A673 (cell line): ENCODE measurements at regions of chrX and their contacts with region 1.

Region 1: DNA sequence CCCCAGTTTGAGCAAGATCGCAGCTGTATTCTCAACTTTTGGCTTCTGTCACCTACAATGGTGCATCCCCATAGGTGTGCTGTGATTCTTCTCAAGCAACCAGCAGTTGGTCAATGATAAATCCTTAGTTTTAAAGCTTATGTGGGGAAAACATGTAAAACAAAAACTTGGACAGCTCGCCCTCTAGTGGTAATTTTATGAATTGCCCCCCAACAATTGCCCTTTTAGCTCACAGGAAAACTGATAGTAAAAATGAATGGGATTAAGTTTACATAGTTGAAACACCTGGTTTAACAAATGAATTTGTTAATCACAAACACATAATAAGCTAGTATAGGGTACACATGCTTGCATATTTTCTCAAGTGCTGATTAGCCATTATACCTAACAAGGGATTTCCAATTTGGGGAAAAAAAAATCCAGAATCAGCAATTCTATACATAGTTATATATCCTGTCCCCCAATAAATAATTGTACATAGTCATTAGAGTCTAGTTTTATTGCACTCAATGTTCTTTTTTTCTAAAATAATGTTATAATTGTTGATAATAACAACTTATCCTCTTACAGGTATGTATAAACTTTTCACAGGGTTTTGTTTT is 30.1 kb downstream of the TEX13A start:
- DNase-seq: peak; percentile 35
- H3K4me3 ChIP-seq: no peak overlapping the region
- H3K27ac ChIP-seq: no peak overlapping the region
- H3K4me1 ChIP-seq: no peaks in the 10 kb centered on the region
- H3K27me3 ChIP-seq: no peaks in the 10 kb centered on the region
- CTCF ChIP-seq: peak; percentile 77

Region 2: DNA sequence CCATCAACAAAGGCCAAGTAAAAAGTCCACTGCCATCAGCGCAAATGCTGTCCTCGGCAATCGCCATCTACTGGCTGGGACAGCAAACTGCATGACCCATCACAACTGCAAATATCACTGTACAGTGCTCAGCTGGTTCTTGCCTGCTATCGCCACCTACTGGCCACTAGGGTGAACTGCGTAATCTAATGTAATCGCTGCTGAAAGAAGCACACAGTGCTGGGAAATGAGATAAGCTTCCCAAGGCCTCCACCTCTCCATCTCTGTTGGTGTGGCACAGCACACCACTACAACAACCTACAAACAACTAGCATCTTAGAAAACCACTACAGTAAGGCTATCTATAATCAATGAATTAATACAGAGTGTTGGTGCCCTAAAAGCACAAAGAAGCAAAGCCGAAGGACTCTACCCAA is 268.1 kb before region 1 on chrX:
- CTCF ChIA-PET with region 1: no interaction called
- POLR2A ChIA-PET with region 1: no interaction called
- intact Hi-C with region 1: no loop called
- DNase-seq: peak; percentile 81
- H3K4me3 ChIP-seq: no peak overlapping the region
- H3K27ac ChIP-seq: no peak overlapping the region
- H3K4me1 ChIP-seq: no peaks in the 10 kb centered on the region
- H3K27me3 ChIP-seq: no peaks in the 10 kb centered on the region
- CTCF ChIP-seq: peak; percentile 100

Region 3: GRCh38 chrX:105136786-105137185 is 53.6 kb before region 1 on chrX:
- CTCF ChIA-PET with region 1: no interaction called
- POLR2A ChIA-PET with region 1: no interaction called
- intact Hi-C with region 1: loop called (anchors 10 kb)
- DNase-seq: no peak
- H3K4me3 ChIP-seq: no peak overlapping the region
- H3K27ac ChIP-seq: no peak overlapping the region
- H3K4me1 ChIP-seq: no peaks in the 10 kb centered on the region
- H3K27me3 ChIP-seq: peaks cover 9% of the 10 kb centered on the region
- CTCF ChIP-seq: no peak